ENCODE measurements at regions of chr5 and their contacts with region 1.

Region 1: GRCh38 chr5:181133610-181134231 is 2.8 kb upstream of the OR2V1 start:
- DNase-seq: peak; percentile 68
- H3K4me3 ChIP-seq: no peak overlapping the region
- H3K27ac ChIP-seq: no peak overlapping the region
- H3K4me1 ChIP-seq: peaks cover 6% of the 10 kb centered on the region
- H3K27me3 ChIP-seq: no peaks in the 10 kb centered on the region
- CTCF ChIP-seq: no peak
- POLR2A ChIP-seq: no peak

Region 2: GRCh38 chr5:179486596-179487051 is 1647.1 kb before region 1 on chr5:
- CTCF ChIA-PET with region 1: no interaction called
- POLR2A ChIA-PET with region 1: no interaction called
- dilution Hi-C with region 1: no loop called
- intact Hi-C with region 1: loop called (anchors 10 kb)
- DNase-seq: no peak
- H3K4me3 ChIP-seq: no peak overlapping the region
- H3K27ac ChIP-seq: no peak overlapping the region
- H3K4me1 ChIP-seq: peaks cover 2% of the 10 kb centered on the region
- H3K27me3 ChIP-seq: no peaks in the 10 kb centered on the region
- CTCF ChIP-seq: no peak
- POLR2A ChIP-seq: no peak

Region 3: DNA sequence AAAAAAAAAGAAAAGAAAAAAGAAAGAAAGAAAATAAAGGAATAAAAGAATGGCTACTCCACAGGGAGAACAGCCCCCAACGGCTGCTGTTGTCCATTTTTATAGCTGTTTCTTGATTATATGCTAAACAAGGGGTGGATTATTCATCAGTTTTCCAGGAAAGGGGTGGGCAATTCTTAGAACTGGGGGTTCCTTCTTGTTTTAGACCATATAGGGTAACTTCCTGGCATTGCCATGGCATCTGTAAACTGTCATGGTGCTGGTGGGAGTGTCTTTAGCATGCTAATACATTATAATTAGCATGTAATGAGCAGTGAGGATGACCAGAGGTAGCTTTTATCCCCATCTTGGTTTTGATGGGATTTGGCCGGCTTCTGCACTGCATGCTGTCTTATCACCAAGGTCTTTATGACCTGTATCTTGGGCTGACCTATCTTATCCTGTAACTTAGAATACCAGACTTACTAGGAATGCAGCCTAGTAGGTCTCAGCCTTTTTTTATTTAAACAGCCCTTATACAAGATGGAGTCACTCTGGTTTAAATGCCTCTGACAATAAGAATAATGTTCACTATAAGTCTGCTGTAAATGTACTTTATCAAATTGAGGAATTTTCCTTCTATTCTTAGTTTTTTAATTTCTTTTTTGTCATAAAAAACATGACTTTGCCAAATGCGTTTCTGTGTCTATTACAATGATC is 42.7 kb after region 1 on chr5:
- CTCF ChIA-PET with region 1: no interaction called
- POLR2A ChIA-PET with region 1: no interaction called
- dilution Hi-C with region 1: no loop called
- intact Hi-C with region 1: no loop called
- DNase-seq: no peak
- H3K4me3 ChIP-seq: no peak overlapping the region
- H3K27ac ChIP-seq: no peak overlapping the region
- H3K4me1 ChIP-seq: peaks cover 7% of the 10 kb centered on the region
- H3K27me3 ChIP-seq: peaks cover 8% of the 10 kb centered on the region in 2 experiments
- CTCF ChIP-seq: no peak
- POLR2A ChIP-seq: no peak

Measured in endothelial cell of umbilical vein (primary cell).